Mammary epithelial cell (primary cell): ENCODE measurements at regions of chr1 and their contacts with region 1.

Region 1: GRCh38 chr1:169348383-169349036 is 19.1 kb downstream of the NME7 start:
- DNase-seq: peak; percentile 32
- H3K4me3 ChIP-seq: no peak overlapping the region
- H3K27ac ChIP-seq: no peak overlapping the region
- H3K4me1 ChIP-seq: no peaks in the 10 kb centered on the region
- H3K27me3 ChIP-seq: no peaks in the 10 kb centered on the region
- CTCF ChIP-seq: peak; percentile 55 to 73

Region 2: GRCh38 chr1:168628807-168629206 is 719.7 kb before region 1 on chr1:
- CTCF ChIA-PET with region 1: no interaction called
- dilution Hi-C with region 1: no loop called
- in situ Hi-C with region 1: no loop called
- intact Hi-C with region 1: loop called (anchors 2 kb)
- DNase-seq: peak; percentile 99
- H3K4me3 ChIP-seq: no peak overlapping the region
- H3K27ac ChIP-seq: peak overlapping the region; percentile 85
- H3K4me1 ChIP-seq: peaks cover 23% of the 10 kb centered on the region
- H3K27me3 ChIP-seq: no peaks in the 10 kb centered on the region
- CTCF ChIP-seq: no peak

Region 3: GRCh38 chr1:168734946-168735345 is 613.6 kb before region 1 on chr1:
- CTCF ChIA-PET with region 1: no interaction called
- dilution Hi-C with region 1: no loop called
- in situ Hi-C with region 1: no loop called
- intact Hi-C with region 1: loop called (anchors 1 kb)
- DNase-seq: no peak
- H3K4me3 ChIP-seq: no peak overlapping the region
- H3K27ac ChIP-seq: no peak overlapping the region
- H3K4me1 ChIP-seq: no peaks in the 10 kb centered on the region
- H3K27me3 ChIP-seq: no peaks in the 10 kb centered on the region
- CTCF ChIP-seq: peak in 1 of 2 donors; percentile 45

Region 4: DNA sequence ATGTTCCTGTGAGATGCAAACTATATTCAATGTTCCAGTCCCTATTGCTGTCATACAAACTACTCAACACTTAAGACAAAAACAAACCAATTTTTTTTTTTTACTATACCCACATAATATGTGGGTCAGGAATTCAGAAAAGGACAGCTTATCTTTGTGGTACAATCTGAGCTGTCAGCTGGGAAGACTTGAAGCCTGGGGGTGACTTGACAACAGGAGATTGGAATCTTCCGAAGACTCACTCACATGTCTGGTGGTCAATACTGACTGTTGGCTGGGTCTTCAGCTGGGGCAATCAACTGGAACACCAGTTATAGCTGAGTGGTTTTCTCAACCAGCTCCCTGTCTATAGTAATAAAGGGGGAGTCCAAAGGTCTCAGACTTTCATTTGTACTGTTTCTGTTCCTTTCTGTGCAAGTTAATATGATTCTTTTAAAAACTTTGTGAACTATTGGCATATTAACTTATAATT is 323.7 kb before region 1 on chr1:
- CTCF ChIA-PET with region 1: no interaction called
- dilution Hi-C with region 1: no loop called
- in situ Hi-C with region 1: loop called in 1 of 2 experiments (anchors 25 kb)
- intact Hi-C with region 1: no loop called
- DNase-seq: no peak
- H3K4me3 ChIP-seq: no peak overlapping the region
- H3K27ac ChIP-seq: no peak overlapping the region
- H3K4me1 ChIP-seq: no peaks in the 10 kb centered on the region
- H3K27me3 ChIP-seq: no peaks in the 10 kb centered on the region
- CTCF ChIP-seq: no peak

Region 5: GRCh38 chr1:169133801-169134502 is 214.6 kb before region 1 on chr1:
- CTCF ChIA-PET with region 1: no interaction called
- dilution Hi-C with region 1: loop called (anchors 25 kb)
- in situ Hi-C with region 1: no loop called
- intact Hi-C with region 1: no loop called
- DNase-seq: no peak
- H3K4me3 ChIP-seq: no peak overlapping the region
- H3K27ac ChIP-seq: no peak overlapping the region
- H3K4me1 ChIP-seq: peaks cover 13% of the 10 kb centered on the region
- H3K27me3 ChIP-seq: no peaks in the 10 kb centered on the region
- CTCF ChIP-seq: peak; percentile 61 to 74

Region 6: DNA sequence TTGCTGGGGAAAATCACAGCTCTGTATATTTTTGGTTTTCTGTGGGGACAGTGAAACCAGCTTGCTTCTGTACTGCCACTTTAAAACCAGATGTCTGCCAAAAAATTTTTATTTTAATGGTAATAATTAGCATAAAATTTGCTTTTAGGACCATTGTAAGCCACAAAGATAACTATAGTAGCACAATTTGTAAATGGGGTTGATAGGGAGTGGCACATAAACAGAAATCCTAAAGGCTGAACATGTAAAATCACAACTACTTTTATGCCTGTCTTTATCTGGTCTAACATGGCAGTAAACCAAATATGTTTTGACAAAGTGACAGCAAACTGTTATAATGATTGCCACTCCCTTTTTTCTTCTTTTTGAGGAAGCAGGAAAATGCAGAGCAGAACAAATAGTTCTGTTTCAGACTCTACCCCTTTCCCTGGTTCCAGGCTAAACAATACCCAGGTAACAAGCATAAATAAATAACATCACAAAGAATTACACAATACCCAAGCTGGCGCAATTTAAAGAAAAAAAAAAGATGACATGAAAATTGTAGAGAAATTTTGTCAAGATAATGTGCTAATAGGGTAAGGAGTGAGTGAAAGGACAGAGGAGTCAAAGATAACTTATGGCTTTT is 102.8 kb after region 1 on chr1:
- CTCF ChIA-PET with region 1: no interaction called
- dilution Hi-C with region 1: no loop called
- in situ Hi-C with region 1: no loop called
- intact Hi-C with region 1: no loop called
- DNase-seq: no peak
- H3K4me3 ChIP-seq: no peak overlapping the region
- H3K27ac ChIP-seq: no peak overlapping the region
- H3K4me1 ChIP-seq: no peaks in the 10 kb centered on the region
- H3K27me3 ChIP-seq: no peaks in the 10 kb centered on the region
- CTCF ChIP-seq: no peak